Ascending aorta (tissue), 2 donors: ENCODE measurements at regions of chr9 and their contacts with region 1.

Region 1: DNA sequence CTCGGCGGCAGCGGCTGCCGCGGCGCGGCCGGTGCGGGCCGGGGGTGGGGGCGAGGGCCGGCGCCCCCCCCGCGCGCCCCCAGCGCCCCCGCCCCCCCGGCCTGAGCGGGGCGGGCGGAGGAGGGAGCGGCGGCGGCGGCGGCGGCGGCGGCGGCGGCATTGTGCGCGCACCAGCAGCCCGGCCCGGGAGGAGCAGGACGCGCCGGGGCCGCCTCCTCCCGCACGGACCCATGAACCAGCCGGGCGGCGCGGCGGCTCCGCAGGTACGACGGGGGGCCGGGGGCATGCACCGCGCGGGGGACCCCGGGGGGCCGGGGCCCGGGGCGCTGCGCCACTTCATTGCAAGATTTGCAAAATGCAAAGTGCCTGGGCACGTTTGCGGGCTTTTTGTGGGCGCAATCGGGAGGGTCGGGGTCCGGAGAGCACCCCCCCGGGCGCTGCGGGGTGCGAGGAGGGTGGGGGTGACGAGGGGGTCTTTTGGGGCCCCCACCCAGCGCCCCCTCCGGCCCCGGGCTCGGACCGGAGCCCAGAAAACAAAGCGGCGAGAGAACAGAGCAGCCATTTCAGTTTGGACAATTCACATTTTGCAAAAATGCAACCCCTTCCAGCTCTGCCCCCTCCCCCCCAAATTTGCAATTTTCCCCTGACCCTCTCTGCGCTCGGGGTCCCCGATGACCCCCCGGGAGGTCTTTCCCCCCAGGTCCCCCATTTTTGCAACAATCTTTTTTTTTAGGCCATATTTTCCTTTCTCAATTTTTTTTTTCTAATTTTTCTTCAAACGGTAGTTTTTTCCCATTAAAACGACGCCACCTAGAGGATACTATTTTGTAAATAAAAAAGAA is at the start of gene ZNF618:
- DNase-seq: peak in 1 of 2 donors; percentile 78
- H3K4me3 ChIP-seq: peak within 1 kb of the TSS; percentile 85 to 98
- H3K27ac ChIP-seq: peak within 1 kb of the TSS; percentile 58 to 66
- H3K4me1 ChIP-seq: peaks cover 11 to 28% of the 10 kb centered on the region in 2 donors
- H3K27me3 ChIP-seq: no peaks in the 10 kb centered on the region
- CTCF ChIP-seq: peak; percentile 29 to 72 (median 61)
- total RNA-seq, gene ZNF618: 16.1 TPM

Region 2: GRCh38 chr9:113682297-113682771 is 194.0 kb before region 1 on chr9:
- intact Hi-C with region 1: loop called (anchors 5 kb)
- DNase-seq: peak in 1 of 2 donors; percentile 89
- H3K4me3 ChIP-seq: no peak overlapping the region
- H3K27ac ChIP-seq: no peak overlapping the region
- H3K4me1 ChIP-seq: no peaks in the 10 kb centered on the region
- H3K27me3 ChIP-seq: no peaks in the 10 kb centered on the region
- CTCF ChIP-seq: peak; percentile 72 to 92 (median 90)

Region 3: DNA sequence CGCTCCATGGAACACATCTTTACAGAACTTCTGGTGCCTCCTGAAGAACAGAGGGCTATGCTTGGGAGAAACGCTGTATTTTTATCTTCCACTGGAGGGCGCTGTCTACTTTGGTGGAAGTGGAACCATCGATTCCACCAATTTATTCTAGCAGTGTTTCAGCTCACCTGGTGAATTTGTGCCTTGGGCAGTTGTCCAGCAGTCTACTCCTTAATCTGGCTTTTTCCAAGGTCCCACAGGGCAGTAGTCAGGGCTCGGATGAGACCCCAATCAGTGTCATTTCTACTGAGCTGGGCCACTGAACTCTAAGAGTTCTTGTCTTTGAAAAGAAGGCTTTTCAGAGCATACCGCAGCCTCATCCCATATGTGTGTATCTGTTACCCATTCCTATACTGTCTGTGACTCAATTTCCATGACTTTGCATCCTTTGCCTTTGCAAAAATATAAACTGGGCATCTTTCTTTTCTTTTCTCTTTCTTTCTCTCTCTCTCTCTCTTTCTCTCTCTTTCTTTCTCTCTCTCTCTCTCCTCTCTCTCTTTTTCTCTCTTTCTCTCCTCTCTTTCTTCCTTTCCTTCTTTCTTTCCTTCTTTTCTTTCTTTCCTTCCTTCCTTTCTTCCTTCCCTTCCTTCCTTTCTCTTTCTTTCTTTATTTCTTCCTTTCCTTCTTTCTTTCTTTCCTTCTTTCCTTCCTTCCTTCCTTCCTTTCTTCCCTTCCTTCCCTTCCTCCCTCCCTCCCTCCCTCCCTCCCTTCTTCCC is 138.7 kb before region 1 on chr9:
- intact Hi-C with region 1: loop called (anchors 5 kb)
- DNase-seq: peak in 1 of 2 donors; percentile 66
- H3K4me3 ChIP-seq: no peak overlapping the region
- H3K27ac ChIP-seq: no peak overlapping the region
- H3K4me1 ChIP-seq: no peaks in the 10 kb centered on the region
- H3K27me3 ChIP-seq: no peaks in the 10 kb centered on the region
- CTCF ChIP-seq: peak; percentile 61 to 83 (median 78)

Region 4: GRCh38 chr9:113807173-113808061 is 69.0 kb before region 1 on chr9:
- intact Hi-C with region 1: loop called (anchors 2 kb)
- DNase-seq: peak in 1 of 2 donors; percentile 67
- H3K4me3 ChIP-seq: peak overlapping the region in 1 of 2 donors; percentile 38
- H3K27ac ChIP-seq: no peak overlapping the region
- H3K4me1 ChIP-seq: peaks cover 3 to 8% of the 10 kb centered on the region in 2 donors
- H3K27me3 ChIP-seq: no peaks in the 10 kb centered on the region
- CTCF ChIP-seq: peak; percentile 82 to 89 (median 82)

Region 5: DNA sequence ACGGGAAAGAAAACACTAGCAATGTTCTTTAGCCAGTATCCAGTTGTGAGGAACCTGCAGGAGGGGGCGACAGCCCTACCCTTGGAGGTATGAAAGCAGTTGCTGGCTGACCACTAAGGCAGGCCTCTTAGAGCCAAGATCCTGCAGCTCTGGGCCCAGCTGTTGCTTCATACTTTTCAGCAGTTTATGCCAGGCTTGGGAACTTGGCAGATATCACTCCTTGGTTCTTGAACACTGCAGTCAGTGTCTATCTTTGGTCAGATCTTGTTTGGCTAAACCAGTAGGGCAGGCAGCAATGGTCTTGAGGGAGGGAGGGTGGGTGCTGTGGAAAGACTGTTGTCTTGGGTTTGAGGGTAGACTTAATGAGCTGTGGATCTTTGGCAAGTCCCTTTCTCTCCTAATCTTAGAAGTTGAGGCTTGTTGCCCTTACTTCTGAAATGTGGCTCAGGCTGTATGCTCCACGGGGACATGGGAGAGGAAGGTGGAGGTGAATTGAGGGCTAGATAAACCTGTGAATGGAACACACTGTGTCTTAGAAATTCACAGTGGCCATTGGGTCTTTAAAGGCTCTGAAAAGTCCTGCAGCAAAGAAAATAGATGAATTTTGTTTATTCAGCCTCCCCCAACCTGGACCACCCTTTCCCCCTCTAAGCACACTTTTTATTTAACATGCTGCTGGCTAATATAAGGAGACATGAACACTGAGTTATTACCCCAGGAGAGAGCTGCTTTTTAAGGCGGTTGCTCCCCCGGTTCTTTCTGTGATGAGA is 37.2 kb after region 1 on chr9:
- intact Hi-C with region 1: loop called (anchors 5 kb)
- DNase-seq: peak in 1 of 2 donors; percentile 89
- H3K4me3 ChIP-seq: no peak overlapping the region
- H3K27ac ChIP-seq: peak overlapping the region; percentile 74 to 75
- H3K4me1 ChIP-seq: peaks cover 2 to 26% of the 10 kb centered on the region in 2 donors
- H3K27me3 ChIP-seq: no peaks in the 10 kb centered on the region
- CTCF ChIP-seq: no peak

Region 6: GRCh38 chr9:113957821-113958341 is 81.5 kb after region 1 on chr9:
- intact Hi-C with region 1: loop called (anchors 5 kb)
- DNase-seq: no peak
- H3K4me3 ChIP-seq: peak overlapping the region in 1 of 2 donors; percentile 0
- H3K27ac ChIP-seq: peak overlapping the region; percentile 77 to 91
- H3K4me1 ChIP-seq: peaks cover 9 to 42% of the 10 kb centered on the region in 2 donors
- H3K27me3 ChIP-seq: no peaks in the 10 kb centered on the region
- CTCF ChIP-seq: no peak

Region 7: DNA sequence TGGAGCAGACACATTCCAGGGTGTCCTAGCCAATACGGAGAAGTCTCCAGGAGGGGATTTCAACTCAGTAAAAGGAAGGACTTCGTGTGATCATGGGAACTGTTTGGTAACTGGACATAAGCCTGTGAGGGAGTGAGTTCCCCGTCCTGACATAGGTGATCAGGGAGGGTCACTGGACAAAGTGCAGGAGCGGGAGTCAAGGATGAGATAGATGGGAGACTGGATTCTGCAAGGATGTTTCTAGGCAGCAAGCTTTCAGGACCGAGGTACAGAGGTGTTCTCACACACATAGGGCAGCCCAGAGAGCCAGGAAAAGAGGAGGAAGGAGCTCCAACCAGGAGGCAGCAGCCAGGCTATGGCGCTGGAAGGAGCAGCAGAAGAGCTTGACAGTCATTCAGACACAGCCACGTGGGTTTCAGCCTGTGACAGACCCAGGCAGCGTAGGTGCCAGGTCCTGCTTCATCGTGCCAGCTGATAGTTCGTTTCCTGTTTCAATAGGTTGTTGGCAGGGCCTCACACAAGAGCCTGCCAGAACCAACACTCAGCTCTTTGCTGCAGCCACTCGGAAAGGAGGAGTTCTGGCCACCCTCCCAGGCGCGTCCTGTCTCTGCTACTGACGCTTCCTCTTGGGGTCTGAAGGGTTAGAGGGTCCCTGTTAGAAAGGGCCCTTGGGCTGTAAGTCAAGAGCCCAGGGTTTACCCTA is 117.6 kb after region 1 on chr9:
- intact Hi-C with region 1: loop called (anchors 5 kb)
- DNase-seq: peak; percentile 69 to 96
- H3K4me3 ChIP-seq: peak overlapping the region in 1 of 2 donors; percentile 32
- H3K27ac ChIP-seq: peak overlapping the region; percentile 50 to 67
- H3K4me1 ChIP-seq: peaks cover 34 to 53% of the 10 kb centered on the region in 2 donors
- H3K27me3 ChIP-seq: no peaks in the 10 kb centered on the region
- CTCF ChIP-seq: no peak

Region 8: GRCh38 chr9:114082017-114082762 is 205.8 kb after region 1 on chr9:
- intact Hi-C with region 1: no loop called
- DNase-seq: peak; percentile 47 to 91
- H3K4me3 ChIP-seq: no peak overlapping the region
- H3K27ac ChIP-seq: no peak overlapping the region
- H3K4me1 ChIP-seq: no peaks in the 10 kb centered on the region
- H3K27me3 ChIP-seq: no peaks in the 10 kb centered on the region
- CTCF ChIP-seq: peak; percentile 72 to 87 (median 76)

Region 9: GRCh38 chr9:114434878-114435311 is 558.5 kb after region 1 on chr9:
- intact Hi-C with region 1: no loop called
- DNase-seq: peak in 1 of 2 donors; percentile 37
- H3K4me3 ChIP-seq: no peak overlapping the region
- H3K27ac ChIP-seq: no peak overlapping the region
- H3K4me1 ChIP-seq: no peaks in the 10 kb centered on the region
- H3K27me3 ChIP-seq: no peaks in the 10 kb centered on the region
- CTCF ChIP-seq: peak in 2 of 3 experiments; percentile 10 to 29